CD4-positive, alpha-beta memory T cell (primary cell): ENCODE measurements at regions of chr1 and their contacts with region 1.

Region 1: GRCh38 chr1:45686317-45687013 is at the start of gene GPBP1L1:
- DNase-seq: peak; percentile 97 to 98 (median 97)
- H3K4me3 ChIP-seq: peak within 1 kb of the TSS; percentile 99 to 100
- H3K4me3 Mint-ChIP-seq: peak within 1 kb of the TSS; percentile 95 to 100 (median 99)
- H3K27ac ChIP-seq: peak within 1 kb of the TSS; percentile 94
- H3K27ac Mint-ChIP-seq: peak within 1 kb of the TSS; percentile 98 to 100 (median 100)
- H3K4me1 ChIP-seq: peaks cover 63% of the 10 kb centered on the region
- H3K4me1 Mint-ChIP-seq: peaks cover 28 to 68% (median 46%) of the 10 kb centered on the region in 4 donors
- H3K27me3 ChIP-seq: no peaks in the 10 kb centered on the region
- H3K27me3 Mint-ChIP-seq: no peaks in the 10 kb centered on the region
- total RNA-seq, gene GPBP1L1: 175 to 187 TPM

Region 2: DNA sequence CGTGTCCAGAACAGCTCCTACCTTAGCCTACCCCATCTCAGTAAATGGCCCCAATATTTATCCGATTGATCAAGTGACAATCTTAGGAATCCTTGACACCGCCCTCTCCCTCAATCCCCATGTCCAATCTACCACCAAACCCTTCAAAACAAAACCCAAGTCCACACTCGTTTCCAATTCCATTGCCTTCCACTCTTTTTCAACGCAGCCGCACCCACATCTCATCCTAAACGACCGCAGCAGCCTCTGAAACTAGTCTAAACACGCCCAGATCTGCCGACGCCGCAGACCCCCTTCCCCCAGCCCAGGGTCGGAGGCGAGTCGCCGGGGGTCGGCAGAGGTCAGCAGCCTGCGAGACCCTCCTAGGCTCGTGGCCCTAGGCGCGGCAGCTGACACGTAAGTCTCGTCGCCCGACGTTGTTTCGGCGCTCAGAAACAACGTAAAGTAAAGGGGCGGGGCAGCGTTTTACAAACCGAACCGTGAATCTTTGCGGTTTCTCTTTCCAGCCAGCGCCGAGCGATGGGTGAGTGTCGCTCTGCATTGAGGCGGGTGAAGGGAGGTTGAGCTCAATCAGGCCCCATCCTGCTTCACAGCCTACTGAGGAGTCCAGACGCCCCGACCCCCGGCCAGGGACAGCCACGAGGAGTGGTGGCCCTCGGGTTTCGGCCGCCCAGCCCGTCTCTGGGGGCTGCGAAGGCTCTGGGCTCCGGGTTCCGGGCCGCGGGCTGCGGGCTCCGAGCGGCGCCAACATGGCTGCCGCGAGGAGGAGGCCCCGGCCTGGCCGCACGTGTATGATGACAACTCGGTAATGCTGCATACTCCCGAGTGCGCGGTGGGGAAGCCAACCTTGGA is 911.2 kb before region 1 on chr1 and contains the start of gene RPS8:
- CTCF ChIA-PET with region 1: no interaction called
- POLR2A ChIA-PET with region 1: interaction called, 10 read pairs
- intact Hi-C with region 1: no loop called
- DNase-seq: peak; percentile 89 to 92 (median 91)
- H3K4me3 ChIP-seq: peak within 1 kb of the TSS; percentile 87 to 88
- H3K4me3 Mint-ChIP-seq: peak within 1 kb of the TSS; percentile 89 to 98 (median 94)
- H3K27ac ChIP-seq: peak within 1 kb of the TSS; percentile 78
- H3K27ac Mint-ChIP-seq: peak within 1 kb of the TSS; percentile 82 to 99 (median 98)
- H3K4me1 ChIP-seq: peaks cover 25% of the 10 kb centered on the region
- H3K4me1 Mint-ChIP-seq: peaks cover 20 to 56% (median 27%) of the 10 kb centered on the region in 4 donors
- H3K27me3 ChIP-seq: no peaks in the 10 kb centered on the region
- H3K27me3 Mint-ChIP-seq: no peaks in the 10 kb centered on the region
- total RNA-seq, gene RPS8: 2,728 to 2,811 TPM

Region 3: DNA sequence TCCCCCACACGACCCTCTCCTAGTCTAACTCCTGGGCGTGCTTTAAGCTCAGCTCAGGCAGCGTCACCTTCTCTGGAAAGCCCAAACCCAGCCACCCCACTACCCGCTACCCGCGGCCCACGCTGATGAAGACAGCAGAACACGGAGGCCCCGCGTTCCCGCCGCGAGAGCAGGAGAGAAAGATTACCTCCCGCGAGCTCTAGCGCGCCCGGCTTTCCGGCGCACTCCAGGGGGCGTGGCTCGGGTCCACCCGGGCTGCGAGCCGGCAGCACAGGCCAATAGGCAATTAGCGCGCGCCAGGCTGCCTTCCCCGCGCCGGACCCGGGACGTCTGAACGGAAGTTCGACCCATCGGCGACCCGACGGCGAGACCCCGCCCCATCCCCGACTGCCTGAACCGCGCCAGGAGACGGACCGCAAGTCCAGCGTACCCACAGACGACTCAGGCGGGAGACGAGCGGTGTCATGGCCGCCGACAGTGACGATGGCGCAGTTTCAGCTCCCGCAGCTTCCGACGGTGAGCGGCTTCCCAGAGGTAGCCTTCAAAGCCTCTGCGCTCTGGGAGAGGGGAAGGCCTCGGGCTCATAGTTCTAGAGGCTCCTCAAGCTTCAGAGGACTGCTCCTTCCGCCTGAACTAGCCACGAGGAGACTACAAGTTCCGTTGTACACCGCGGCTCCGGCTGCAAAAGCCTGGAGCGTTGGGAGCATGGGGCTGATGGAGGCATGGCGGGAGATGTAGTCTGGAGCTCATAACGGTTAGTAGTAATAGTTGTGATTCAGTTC is 346.5 kb before region 1 on chr1 and contains the starts of genes MUTYH and TOE1:
- CTCF ChIA-PET with region 1: no interaction called
- POLR2A ChIA-PET with region 1: interaction called, 12 read pairs
- intact Hi-C with region 1: loop called (anchors 1 kb)
- DNase-seq: peak; percentile 89 to 92 (median 90)
- H3K4me3 ChIP-seq: peak within 1 kb of the TSS; percentile 84 to 91
- H3K4me3 Mint-ChIP-seq: peak within 1 kb of the TSS; percentile 98 to 100 (median 100)
- H3K27ac ChIP-seq: peak within 1 kb of the TSS; percentile 93
- H3K27ac Mint-ChIP-seq: peak within 1 kb of the TSS; percentile 96 to 100 (median 99)
- H3K4me1 ChIP-seq: peaks cover 46% of the 10 kb centered on the region
- H3K4me1 Mint-ChIP-seq: peaks cover 31 to 75% (median 51%) of the 10 kb centered on the region in 4 donors
- H3K27me3 ChIP-seq: no peaks in the 10 kb centered on the region
- H3K27me3 Mint-ChIP-seq: no peaks in the 10 kb centered on the region
- total RNA-seq, gene MUTYH: 70.0 to 72.1 TPM
- total RNA-seq, gene TOE1: 18.2 to 18.9 TPM

Region 4: DNA sequence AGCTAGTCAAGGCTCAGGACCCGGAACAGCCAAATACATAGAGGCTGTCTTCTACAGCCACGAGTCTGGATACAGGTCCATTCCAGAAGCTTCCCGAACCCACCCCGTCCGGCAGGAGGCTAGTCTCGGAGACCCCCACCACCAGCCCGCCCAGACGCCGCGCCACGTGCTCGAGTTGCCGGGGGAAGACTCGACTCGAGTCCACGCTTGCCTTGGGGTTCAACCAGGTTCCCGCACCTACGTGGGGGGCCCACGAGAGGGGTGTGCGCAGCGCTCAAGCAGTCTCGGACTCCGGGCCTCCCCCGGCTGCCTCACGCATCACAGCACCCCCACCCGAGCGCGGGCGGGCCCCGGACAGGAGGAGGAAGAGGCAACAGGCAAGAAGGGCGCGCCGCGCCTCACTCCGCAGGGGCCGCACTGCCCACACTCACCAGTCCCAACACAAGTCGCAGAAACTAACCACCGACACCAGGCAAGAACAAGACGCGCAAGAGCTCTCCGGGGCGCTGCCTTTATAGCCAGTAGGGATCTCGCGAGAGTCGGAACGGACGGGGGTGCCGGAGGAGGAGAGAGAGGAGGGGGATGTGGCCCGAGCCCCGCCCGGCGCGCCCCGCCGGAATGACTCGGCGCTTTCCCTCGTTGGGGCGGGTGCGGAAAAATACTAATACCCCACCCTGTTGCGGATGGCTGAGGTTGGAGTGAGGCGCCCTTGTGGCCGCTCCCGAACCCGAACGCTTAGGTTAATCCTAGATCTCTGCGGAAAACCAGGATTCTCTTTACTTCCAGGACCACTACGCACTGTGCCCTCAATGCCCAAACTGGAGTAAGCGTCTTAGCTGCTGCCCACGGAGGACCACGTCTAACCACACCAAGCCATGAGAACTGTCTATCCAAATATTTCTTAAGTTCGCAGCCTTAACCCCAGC is 164.8 kb before region 1 on chr1 and contains the start of gene PRDX1:
- CTCF ChIA-PET with region 1: interaction called, 4 read pairs
- POLR2A ChIA-PET with region 1: interaction called, 25 read pairs
- intact Hi-C with region 1: loop called (anchors 1 kb)
- DNase-seq: peak; percentile 95
- H3K4me3 ChIP-seq: peak within 1 kb of the TSS; percentile 90 to 94
- H3K4me3 Mint-ChIP-seq: peak within 1 kb of the TSS; percentile 93 to 97 (median 96)
- H3K27ac ChIP-seq: peak within 1 kb of the TSS; percentile 87
- H3K27ac Mint-ChIP-seq: peak within 1 kb of the TSS; percentile 85 to 97 (median 93)
- H3K4me1 ChIP-seq: peaks cover 25% of the 10 kb centered on the region
- H3K4me1 Mint-ChIP-seq: peaks cover 17 to 41% (median 29%) of the 10 kb centered on the region in 4 donors
- H3K27me3 ChIP-seq: no peaks in the 10 kb centered on the region
- H3K27me3 Mint-ChIP-seq: no peaks in the 10 kb centered on the region
- total RNA-seq, gene PRDX1: 130 to 145 TPM

Region 5: DNA sequence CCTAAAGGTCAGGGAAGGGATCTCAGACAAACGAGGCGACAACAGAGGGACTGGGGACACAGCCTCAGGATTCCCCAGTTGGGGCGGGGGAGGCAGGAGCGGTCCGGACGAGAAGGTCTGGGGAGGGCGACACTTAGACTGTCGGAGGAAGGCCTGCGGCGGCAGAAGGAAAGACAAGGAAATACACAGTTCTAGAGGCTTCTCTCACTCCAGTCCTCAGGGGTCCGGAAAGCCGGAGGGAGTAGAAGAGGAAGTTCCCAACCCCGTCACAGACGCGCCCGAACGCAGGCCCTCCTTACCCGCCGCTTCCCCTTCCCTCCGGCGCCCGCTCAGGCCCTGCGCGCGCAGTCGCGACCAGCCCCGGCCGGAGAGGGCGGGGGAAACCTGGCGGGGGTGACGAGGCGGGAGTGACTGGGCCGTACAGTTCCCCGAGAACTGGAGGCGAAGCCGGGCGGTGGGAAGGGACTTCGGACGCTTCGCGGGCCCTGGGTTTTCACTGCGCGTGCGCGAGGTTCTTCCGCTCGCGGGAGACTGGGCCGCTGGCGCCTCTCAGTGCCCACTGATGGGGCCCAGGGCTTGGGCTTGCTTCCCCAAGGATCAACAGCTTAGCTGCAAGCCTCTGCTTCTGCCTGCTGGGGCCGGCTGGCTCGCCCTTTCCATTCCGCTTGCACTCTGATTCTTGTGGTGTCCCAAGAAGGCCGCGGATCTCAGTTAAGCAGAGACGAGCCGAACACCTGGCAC is 64.0 kb after region 1 on chr1 and contains the start of gene IPP:
- CTCF ChIA-PET with region 1: no interaction called
- POLR2A ChIA-PET with region 1: interaction called, 20 read pairs
- intact Hi-C with region 1: loop called (anchors 1 kb)
- DNase-seq: peak; percentile 89 to 92 (median 90)
- H3K4me3 ChIP-seq: peak within 1 kb of the TSS; percentile 84 to 86
- H3K4me3 Mint-ChIP-seq: peak within 1 kb of the TSS; percentile 94 to 100 (median 98)
- H3K27ac ChIP-seq: peak within 1 kb of the TSS; percentile 93
- H3K27ac Mint-ChIP-seq: peak within 1 kb of the TSS; percentile 98 to 100 (median 99)
- H3K4me1 ChIP-seq: peaks cover 22% of the 10 kb centered on the region
- H3K4me1 Mint-ChIP-seq: peaks cover 15 to 44% (median 30%) of the 10 kb centered on the region in 4 donors
- H3K27me3 ChIP-seq: no peaks in the 10 kb centered on the region
- H3K27me3 Mint-ChIP-seq: no peaks in the 10 kb centered on the region
- total RNA-seq, gene IPP: 17.3 to 19.7 TPM

Region 6: DNA sequence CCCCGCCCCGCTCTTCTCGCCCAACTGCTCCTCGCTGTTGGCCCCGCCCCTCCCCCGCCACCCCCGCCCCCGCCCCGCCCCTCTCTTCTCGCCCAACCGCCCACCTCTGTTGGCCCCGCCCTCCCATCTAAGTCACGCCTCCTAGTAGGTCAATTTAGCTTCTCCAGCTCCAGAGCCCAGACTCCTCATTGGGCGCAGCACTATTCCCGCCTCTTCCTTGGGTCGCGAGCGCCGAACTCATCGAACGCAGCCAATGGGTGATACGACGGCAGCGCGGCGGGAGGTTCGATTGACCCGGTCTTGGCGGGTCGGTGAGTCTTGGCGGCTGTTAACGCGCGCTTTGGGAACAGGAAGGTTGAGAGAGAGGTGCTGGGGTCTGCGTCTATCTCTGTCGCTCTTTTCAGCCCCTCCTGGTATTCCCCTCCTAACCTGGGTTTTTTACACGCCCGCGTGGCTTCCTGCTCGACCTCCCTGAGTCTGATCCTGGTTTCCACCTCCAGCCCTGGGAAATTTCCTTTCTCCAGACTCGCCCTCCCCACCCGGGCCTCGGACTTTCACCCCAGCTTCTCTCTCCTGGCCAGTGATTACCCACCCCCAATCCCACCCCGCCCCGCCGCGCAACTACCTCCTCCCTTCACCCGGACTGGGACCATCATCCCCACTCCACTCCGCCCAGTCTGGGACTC is 561.1 kb after region 1 on chr1 and contains the start of gene RAD54L:
- CTCF ChIA-PET with region 1: no interaction called
- POLR2A ChIA-PET with region 1: interaction called, 5 read pairs
- intact Hi-C with region 1: loop called (anchors 2 kb)
- DNase-seq: peak; percentile 94 to 98 (median 96)
- H3K4me3 ChIP-seq: peak within 1 kb of the TSS; percentile 85 to 91
- H3K4me3 Mint-ChIP-seq: peak within 1 kb of the TSS; percentile 89 to 95 (median 92)
- H3K27ac ChIP-seq: peak within 1 kb of the TSS; percentile 53
- H3K27ac Mint-ChIP-seq: peak within 1 kb of the TSS; percentile 61 to 90 (median 87)
- H3K4me1 ChIP-seq: peaks cover 13% of the 10 kb centered on the region
- H3K4me1 Mint-ChIP-seq: peaks cover 11 to 16% (median 14%) of the 10 kb centered on the region in 4 donors
- H3K27me3 ChIP-seq: no peaks in the 10 kb centered on the region
- H3K27me3 Mint-ChIP-seq: no peaks in the 10 kb centered on the region
- total RNA-seq, gene RAD54L: 1.0 to 1.1 TPM